IMR-90 (cell line): ENCODE measurements at regions of chr2 and their contacts with region 1.

Region 1: DNA sequence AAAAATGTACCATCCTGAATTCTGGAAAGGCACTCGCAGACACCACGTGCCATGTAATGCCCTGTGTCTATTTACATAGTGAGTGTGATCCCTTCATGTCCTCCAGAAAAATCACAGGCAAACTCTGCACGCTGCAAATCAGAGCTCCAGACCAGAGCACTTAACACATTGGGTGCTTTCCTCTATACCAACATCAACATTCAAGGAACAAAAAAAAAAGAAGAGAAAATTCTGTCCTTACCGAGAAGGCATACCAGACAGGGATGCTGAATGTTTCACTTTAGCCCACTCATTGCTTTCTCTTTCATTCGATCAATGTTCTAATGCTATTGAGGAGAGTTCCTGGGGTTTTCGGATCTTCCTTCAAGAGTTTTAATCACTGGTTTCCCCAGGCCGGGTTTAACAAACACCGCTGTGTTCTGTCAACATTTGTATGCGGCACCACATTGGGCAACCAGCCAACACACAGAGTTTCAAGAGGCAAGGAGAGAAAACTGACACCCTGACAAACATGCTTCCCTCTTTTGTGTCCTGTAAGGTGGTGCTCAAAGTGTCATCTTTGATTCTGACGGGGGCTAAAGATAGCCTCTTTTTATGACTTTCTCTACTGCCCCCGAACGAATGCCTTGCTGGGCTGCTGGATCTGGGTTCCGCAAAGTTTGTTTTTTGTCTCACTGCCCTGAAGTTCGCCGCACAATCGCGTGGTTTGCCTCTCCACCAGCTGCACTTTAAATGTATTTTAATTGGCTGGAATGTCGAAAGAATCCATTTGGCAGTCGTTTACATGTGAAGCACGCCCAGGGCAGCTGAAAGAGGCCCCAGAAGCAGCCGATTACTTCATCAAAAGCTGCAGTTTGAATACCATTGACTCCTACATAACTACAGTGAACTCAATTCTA is 106.4 kb upstream of the NCKAP5 start:
- DNase-seq: peak; percentile 90
- ATAC-seq: peak; percentile 82
- H3K4me3 ChIP-seq: peak overlapping the region; percentile 41
- H3K27ac ChIP-seq: peak overlapping the region; percentile 96
- H3K4me1 ChIP-seq: peaks cover 20% of the 10 kb centered on the region
- H3K27me3 ChIP-seq: no peaks in the 10 kb centered on the region
- CTCF ChIP-seq: no peak
- POLR2A ChIP-seq: no peak
- RAD21 ChIP-seq: no peak

Region 2: DNA sequence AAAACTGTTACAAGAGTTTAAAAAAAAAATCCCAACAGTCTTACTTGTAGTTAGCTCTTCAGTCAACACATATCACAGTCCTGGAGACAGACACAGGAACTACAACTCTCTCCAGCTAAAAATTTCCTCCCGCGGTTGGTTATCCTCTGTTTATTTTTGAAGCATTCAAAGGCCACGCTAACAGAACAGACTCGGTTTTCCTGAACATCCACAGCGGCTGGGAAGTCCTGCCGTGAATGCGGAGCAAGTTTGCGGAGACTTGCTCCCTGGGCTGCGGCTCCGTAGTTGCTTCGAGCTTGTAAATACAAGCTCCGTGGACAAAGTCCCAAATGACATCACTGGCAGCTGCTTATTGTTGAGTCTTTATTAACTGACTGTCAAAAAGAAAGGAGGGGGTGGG is 106.5 kb before region 1 on chr2 and contains the start of gene NCKAP5:
- CTCF ChIA-PET with region 1: no interaction called
- POLR2A ChIA-PET with region 1: no interaction called
- dilution Hi-C with region 1: no loop called
- in situ Hi-C with region 1: no loop called
- intact Hi-C with region 1: loop called (anchors 2 kb)
- DNase-seq: peak; percentile 82
- ATAC-seq: peak; percentile 67
- H3K4me3 ChIP-seq: peak within 1 kb of the TSS; percentile 50
- H3K27ac ChIP-seq: peak within 1 kb of the TSS; percentile 84
- H3K4me1 ChIP-seq: peaks cover 15% of the 10 kb centered on the region
- H3K27me3 ChIP-seq: no peaks in the 10 kb centered on the region
- CTCF ChIP-seq: peak; percentile 24; the same call in 1 of the 2 replicates
- POLR2A ChIP-seq: no peak
- RAD21 ChIP-seq: peak; percentile 23
- total RNA-seq, gene NCKAP5: 3.9 and 5.3 TPM in 2 replicates

Region 3: GRCh38 chr2:133732982-133733900 is 58.6 kb after region 1 on chr2:
- CTCF ChIA-PET with region 1: no interaction called
- POLR2A ChIA-PET with region 1: no interaction called
- dilution Hi-C with region 1: no loop called
- in situ Hi-C with region 1: no loop called
- intact Hi-C with region 1: no loop called
- DNase-seq: no peak
- ATAC-seq: no peak
- H3K4me3 ChIP-seq: no peak overlapping the region
- H3K27ac ChIP-seq: peak overlapping the region; percentile 17; the same call in 1 of the 2 replicates
- H3K4me1 ChIP-seq: peaks cover 13% of the 10 kb centered on the region
- H3K27me3 ChIP-seq: no peaks in the 10 kb centered on the region
- CTCF ChIP-seq: no peak
- POLR2A ChIP-seq: no peak
- RAD21 ChIP-seq: no peak

Region 4: DNA sequence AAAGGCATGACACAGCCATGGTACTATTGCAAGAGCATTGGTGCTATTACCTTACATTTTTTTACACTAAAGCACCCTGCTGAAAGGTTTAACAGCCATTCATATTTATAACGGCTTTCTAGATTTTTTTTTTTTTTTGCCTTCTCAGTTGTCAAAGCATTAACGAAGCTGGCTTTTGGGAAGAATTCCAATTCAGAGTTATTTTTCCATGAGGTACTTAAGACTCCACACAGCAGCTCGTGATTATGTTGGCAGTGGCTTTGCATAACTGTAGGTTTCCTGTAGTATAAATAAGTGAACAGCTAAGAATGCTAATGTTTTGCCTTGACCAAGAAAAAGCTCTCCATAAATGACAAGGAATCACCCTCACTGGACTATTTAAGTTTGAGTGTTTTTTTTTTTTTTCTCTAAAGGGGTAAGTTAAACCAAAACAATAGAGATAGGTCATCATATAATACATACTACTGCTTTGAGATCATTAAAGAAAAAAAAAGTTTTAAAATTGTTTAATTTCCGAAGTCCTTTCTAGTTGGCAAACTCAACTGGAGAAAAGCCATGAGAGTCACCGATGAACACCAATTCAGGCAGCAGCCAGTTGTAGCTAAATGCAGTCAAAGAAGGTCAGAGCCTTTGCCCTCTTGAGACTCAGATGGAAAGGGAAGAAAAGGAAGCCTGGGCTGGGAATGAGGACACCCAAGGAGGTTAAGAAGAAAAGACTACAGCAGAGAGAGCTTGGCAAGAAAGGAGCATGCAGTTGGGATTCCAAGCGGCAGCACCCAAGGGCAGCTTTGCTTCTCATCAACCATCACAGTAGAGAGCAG is 81.0 kb after region 1 on chr2:
- CTCF ChIA-PET with region 1: no interaction called
- POLR2A ChIA-PET with region 1: no interaction called
- dilution Hi-C with region 1: no loop called
- in situ Hi-C with region 1: no loop called
- intact Hi-C with region 1: loop called (anchors 2 kb)
- DNase-seq: peak; percentile 100
- ATAC-seq: peak; percentile 88
- H3K4me3 ChIP-seq: no peak overlapping the region
- H3K27ac ChIP-seq: peak overlapping the region; percentile 95
- H3K4me1 ChIP-seq: peaks cover 17% of the 10 kb centered on the region
- H3K27me3 ChIP-seq: no peaks in the 10 kb centered on the region
- CTCF ChIP-seq: no peak
- POLR2A ChIP-seq: no peak
- RAD21 ChIP-seq: no peak